ENCODE measurements at regions of chr18 and their contacts with region 1.

Region 1: DNA sequence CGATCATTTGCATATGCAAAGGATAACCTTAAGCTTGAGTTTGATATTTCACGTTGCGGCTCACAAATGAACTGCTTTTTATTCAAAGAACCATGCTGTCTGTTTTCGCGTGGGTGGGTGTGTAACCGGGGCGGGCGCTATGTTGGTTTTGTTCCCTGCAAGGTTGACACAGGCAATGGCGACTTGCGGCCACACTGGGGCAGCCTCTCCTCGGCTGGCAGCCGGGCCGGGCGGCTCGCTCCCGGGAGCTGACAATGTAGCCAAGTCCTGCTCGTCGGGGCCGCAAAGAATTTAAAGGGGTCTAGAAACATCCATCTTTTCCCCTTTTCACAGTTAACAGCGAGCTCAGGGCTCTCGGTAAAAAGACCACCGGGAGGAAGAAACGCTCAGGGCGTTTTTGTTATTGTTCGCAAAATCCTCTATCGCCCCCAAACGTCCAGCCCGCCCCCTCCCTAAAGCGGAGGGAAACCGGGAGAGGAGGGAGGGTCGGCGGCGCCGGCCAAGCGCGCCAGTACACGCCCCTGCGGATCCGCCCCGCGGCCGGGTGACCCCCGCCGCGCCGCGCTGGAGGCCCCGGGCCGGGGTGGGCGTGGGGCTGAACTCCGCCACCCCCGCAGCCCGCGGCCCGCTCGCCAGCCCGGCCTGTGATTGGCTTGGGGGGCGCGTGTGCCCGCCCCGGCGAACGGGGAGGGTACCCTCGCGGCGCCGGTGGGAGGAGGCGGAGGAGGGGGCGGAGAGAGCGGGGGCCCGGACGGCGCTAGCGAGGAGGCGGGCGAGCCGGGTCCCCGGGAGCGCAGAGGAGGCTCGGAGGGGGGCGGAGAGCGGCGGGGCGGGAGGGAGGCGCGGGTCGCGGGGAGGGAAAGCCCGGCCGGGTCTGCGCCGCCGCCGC is at the start of gene NEDD4L:
- DNase-seq: peak; percentile 92
- ATAC-seq: peak; percentile 87
- H3K4me3 Mint-ChIP-seq: peak within 1 kb of the TSS; percentile 79
- H3K27ac Mint-ChIP-seq: peak within 1 kb of the TSS; percentile 35
- H3K4me1 Mint-ChIP-seq: peaks cover 18% of the 10 kb centered on the region
- H3K27me3 Mint-ChIP-seq: peaks cover 26% of the 10 kb centered on the region
- total RNA-seq, gene NEDD4L: 6.4 to 6.8 TPM

Region 2: DNA sequence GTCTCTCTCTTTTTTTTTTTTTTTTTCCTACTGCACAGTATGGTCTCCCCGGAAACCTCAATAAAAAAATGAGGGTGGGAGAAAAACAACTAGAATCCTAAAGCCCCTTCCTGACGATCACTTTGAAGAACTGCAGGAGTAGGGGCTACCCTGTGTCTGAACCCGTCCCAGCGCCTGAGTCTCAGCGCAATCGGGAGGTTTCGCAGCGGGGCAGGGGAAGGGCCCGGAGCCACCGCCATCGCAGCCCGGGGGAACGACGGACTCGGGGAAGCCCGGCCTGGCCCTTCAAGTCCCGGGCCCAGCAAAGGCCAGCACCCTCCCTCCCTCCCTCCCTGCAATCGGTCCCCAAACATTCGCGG is 422.5 kb before region 1 on chr18:
- CTCF ChIA-PET with region 1: no interaction called
- POLR2A ChIA-PET with region 1: no interaction called
- intact Hi-C with region 1: loop called in 1 of 2 experiments (anchors 1 kb)
- DNase-seq: peak; percentile 54
- ATAC-seq: peak; percentile 24
- H3K4me3 Mint-ChIP-seq: peak overlapping the region; percentile 88
- H3K27ac Mint-ChIP-seq: peak overlapping the region; percentile 93
- H3K4me1 Mint-ChIP-seq: peaks cover 26% of the 10 kb centered on the region
- H3K27me3 Mint-ChIP-seq: no peaks in the 10 kb centered on the region

Region 3: DNA sequence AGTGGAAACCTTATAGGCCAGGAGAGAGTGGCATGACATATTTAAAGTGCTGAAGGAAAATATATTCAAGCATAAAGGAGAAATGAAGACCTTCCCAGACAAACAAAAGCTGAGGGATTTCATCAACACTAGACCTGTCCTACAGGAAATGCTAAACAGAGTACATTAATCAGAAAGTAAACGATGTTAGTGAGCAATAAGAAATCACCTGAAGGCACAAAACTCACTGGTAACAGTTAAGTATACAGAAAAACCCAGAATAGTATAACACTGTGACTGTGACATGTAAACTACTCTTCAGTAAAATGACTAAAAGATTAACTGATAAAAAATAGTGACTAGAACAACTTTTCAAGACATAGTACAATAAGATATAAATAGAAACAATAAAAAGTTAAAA is 328.1 kb before region 1 on chr18:
- CTCF ChIA-PET with region 1: no interaction called
- POLR2A ChIA-PET with region 1: no interaction called
- intact Hi-C with region 1: no loop called
- DNase-seq: no peak
- ATAC-seq: no peak
- H3K4me3 Mint-ChIP-seq: no peak overlapping the region
- H3K27ac Mint-ChIP-seq: no peak overlapping the region
- H3K4me1 Mint-ChIP-seq: no peaks in the 10 kb centered on the region
- H3K27me3 Mint-ChIP-seq: no peaks in the 10 kb centered on the region

Region 4: DNA sequence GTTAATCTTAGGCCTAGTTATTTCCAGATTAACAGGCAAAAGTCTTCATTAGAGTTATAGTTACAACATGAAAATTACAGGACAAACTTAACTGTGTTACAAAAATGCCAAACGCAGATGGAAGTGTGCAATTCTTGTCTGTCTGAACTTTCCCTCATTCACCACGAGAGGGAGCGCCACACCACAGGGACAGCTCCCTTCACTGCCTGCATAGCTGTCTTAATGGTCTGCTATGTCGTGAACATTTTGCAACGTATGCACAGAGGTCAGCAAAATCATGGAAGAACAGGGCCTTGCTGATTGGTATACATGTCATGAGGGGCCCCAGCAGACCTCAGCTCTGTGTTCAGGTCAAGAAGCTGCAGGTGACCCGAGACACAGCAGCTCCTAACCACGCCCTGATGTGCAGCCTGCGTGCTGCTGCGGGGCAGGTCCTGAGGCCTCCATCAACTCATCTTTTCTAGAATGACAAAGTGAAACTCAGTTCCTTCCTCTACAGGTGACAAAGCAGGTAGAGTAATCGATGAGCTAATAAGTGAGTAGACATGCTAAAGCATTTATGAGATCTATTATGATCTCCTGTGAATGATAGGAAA is 161.8 kb before region 1 on chr18:
- CTCF ChIA-PET with region 1: interaction called, 5 read pairs
- POLR2A ChIA-PET with region 1: no interaction called
- intact Hi-C with region 1: loop called in 1 of 2 experiments (anchors 10 kb)
- DNase-seq: peak; percentile 74
- ATAC-seq: peak; percentile 90
- H3K4me3 Mint-ChIP-seq: no peak overlapping the region
- H3K27ac Mint-ChIP-seq: no peak overlapping the region
- H3K4me1 Mint-ChIP-seq: peaks cover 2% of the 10 kb centered on the region
- H3K27me3 Mint-ChIP-seq: peaks cover 13% of the 10 kb centered on the region

Region 5: DNA sequence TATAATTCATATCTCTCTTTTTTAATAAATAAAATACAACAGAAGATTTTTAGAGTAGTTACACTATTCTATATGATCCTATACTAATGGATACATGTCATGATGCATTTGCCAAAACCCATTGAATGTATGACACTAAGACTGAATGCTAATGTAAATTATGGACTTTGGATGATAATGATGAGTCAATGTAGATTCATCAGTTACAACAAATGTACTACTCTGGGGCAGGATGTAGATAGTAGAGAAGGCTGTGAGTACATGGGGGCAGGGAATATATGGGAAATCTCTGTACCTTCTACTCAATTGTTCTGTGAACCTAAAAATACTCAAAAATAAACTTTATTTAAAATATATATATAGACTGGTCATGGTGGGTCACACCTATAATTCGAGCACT is 45.3 kb before region 1 on chr18:
- CTCF ChIA-PET with region 1: no interaction called
- POLR2A ChIA-PET with region 1: no interaction called
- intact Hi-C with region 1: no loop called
- DNase-seq: no peak
- ATAC-seq: no peak
- H3K4me3 Mint-ChIP-seq: no peak overlapping the region
- H3K27ac Mint-ChIP-seq: no peak overlapping the region
- H3K4me1 Mint-ChIP-seq: no peaks in the 10 kb centered on the region
- H3K27me3 Mint-ChIP-seq: peaks cover 22% of the 10 kb centered on the region

Region 6: DNA sequence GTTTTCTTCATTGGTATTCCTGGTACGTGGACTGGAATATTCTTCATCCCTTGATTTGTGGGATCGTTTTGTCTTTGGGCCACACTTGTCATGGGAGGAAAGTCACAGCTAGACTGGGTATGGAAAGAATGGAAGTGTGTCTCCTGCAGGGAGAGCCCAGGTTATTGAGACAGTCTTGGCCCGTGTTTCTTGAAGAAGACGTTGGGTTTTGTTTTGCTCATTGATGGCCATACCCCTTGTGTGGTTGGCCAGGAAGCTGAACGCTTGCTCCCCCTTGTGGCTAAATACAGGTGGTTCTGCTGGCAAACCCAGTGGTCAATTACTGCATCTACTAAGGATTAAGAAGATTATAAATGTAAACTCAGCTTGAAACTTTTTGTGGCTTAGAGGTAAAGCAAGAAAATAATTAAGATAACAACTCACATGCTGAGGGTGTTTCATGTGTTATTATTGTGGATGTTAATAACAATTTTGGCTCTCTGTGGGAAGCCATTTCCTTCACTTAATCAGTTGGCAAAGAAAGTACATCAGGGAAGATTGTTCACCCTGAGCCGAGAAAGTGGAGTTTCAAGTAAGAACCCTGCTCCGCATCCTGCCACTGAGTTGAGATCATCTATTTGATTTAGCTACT is 92.1 kb after region 1 on chr18:
- CTCF ChIA-PET with region 1: interaction called, 7 read pairs
- POLR2A ChIA-PET with region 1: no interaction called
- intact Hi-C with region 1: loop called (anchors 1 to 5 kb)
- DNase-seq: peak; percentile 72
- ATAC-seq: peak; percentile 84
- H3K4me3 Mint-ChIP-seq: no peak overlapping the region
- H3K27ac Mint-ChIP-seq: no peak overlapping the region
- H3K4me1 Mint-ChIP-seq: peaks cover 7% of the 10 kb centered on the region
- H3K27me3 Mint-ChIP-seq: peaks cover 7% of the 10 kb centered on the region

Region 7: GRCh38 chr18:58303363-58303762 is 259.6 kb after region 1 on chr18:
- CTCF ChIA-PET with region 1: interaction called, 3 read pairs
- POLR2A ChIA-PET with region 1: no interaction called
- intact Hi-C with region 1: loop called in 1 of 2 experiments (anchors 5 kb)
- DNase-seq: peak; percentile 68
- ATAC-seq: peak; percentile 88
- H3K4me3 Mint-ChIP-seq: no peak overlapping the region
- H3K27ac Mint-ChIP-seq: no peak overlapping the region
- H3K4me1 Mint-ChIP-seq: peaks cover 36% of the 10 kb centered on the region
- H3K27me3 Mint-ChIP-seq: peaks cover 4% of the 10 kb centered on the region

Region 8: GRCh38 chr18:58493516-58494253 is 449.9 kb after region 1 on chr18:
- CTCF ChIA-PET with region 1: no interaction called
- POLR2A ChIA-PET with region 1: no interaction called
- intact Hi-C with region 1: loop called in 1 of 2 experiments (anchors 5 kb)
- DNase-seq: peak; percentile 87
- ATAC-seq: peak; percentile 95
- H3K4me3 Mint-ChIP-seq: no peak overlapping the region
- H3K27ac Mint-ChIP-seq: no peak overlapping the region
- H3K4me1 Mint-ChIP-seq: peaks cover 9% of the 10 kb centered on the region
- H3K27me3 Mint-ChIP-seq: peaks cover 27% of the 10 kb centered on the region